CD4-positive, alpha-beta memory T cell (primary cell): ENCODE measurements at regions of chr1 and their contacts with region 1.

Region 1: DNA sequence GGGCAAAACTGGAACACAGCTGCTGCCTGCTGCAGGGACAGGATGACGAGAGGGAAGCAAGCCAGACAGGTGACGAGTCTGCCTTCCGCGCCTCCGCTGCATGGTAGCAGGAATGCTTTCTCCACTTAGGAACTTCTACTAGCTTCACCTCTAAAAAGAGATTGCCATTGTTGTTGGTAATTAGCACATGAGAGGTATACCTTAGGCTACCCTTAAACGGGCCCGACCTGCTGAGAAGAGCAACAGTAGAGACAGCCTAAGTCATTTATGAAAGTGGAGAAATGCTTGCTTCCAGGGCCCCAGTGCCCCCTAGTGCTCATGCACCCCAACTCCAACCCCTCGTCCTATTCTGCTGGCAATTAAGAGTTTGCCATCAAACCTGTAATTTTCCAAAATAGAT is 96.9 kb upstream of the AKT3 start:
- DNase-seq: peak in 4 of 5 donors; percentile 34 to 41 (median 38)
- H3K4me3 ChIP-seq: no peak overlapping the region
- H3K4me3 Mint-ChIP-seq: peak overlapping the region in 1 of 8 donors; percentile 73
- H3K27ac ChIP-seq: no peak overlapping the region
- H3K27ac Mint-ChIP-seq: peak overlapping the region in 1 of 7 donors; percentile 66
- H3K4me1 ChIP-seq: no peaks in the 10 kb centered on the region
- H3K4me1 Mint-ChIP-seq: peaks cover 0 to under 1% (median 0%) of the 10 kb centered on the region in 4 donors
- H3K27me3 ChIP-seq: no peaks in the 10 kb centered on the region
- H3K27me3 Mint-ChIP-seq: peaks cover 0 to 2% of the 10 kb centered on the region in 2 donors

Region 2: DNA sequence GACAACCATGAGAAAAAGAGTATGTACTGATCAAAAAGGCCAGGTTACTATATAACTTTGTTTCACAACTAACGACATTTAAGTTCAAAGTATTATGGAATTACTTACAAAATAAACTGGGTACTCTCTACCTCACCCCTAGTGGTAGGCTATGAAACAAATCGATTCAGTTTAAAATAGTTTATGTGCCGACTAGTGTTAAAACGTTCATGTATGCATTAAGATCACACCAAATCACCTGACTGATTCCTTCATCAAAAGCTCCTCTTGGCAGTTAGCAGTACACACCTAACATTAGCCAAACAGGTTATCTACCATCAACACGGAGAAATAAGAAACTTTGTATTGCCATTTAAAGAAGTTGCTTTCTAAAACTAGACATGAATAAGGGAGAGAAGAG is 234.0 kb before region 1 on chr1:
- CTCF ChIA-PET with region 1: interaction called, 3 read pairs
- POLR2A ChIA-PET with region 1: no interaction called
- intact Hi-C with region 1: loop called (anchors 1 kb)
- DNase-seq: no peak
- H3K4me3 ChIP-seq: no peak overlapping the region
- H3K4me3 Mint-ChIP-seq: no peak overlapping the region
- H3K27ac ChIP-seq: no peak overlapping the region
- H3K27ac Mint-ChIP-seq: no peak overlapping the region
- H3K4me1 ChIP-seq: peaks cover 7% of the 10 kb centered on the region
- H3K4me1 Mint-ChIP-seq: peaks cover 38 to 57% (median 48%) of the 10 kb centered on the region in 4 donors
- H3K27me3 ChIP-seq: no peaks in the 10 kb centered on the region
- H3K27me3 Mint-ChIP-seq: no peaks in the 10 kb centered on the region

Region 3: DNA sequence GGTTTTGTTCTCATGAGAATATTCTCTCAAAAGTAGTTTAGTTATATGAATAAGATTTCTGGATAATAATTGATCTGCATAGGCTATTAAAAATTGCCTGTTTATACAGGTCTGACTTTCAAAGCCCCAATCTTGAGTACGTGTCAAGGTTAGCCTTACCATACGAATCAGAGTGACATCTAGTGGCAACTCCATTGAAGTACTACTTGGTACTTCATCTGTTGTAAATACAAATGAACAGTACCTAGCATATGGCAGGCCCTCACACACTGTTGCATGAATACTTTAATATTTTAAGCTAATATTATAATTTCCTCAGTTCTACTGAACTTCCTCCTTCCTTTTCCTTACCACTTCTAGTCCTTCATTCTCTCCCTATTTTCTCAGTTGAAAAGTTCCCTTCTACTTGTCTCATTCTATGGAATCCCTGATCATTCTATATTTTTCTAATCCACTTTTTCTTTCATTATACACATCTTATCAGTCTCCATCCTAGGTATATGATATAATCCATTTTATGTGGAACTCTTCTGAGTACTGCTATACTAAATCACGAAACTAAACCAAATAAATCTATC is 198.2 kb before region 1 on chr1:
- CTCF ChIA-PET with region 1: no interaction called
- POLR2A ChIA-PET with region 1: no interaction called
- intact Hi-C with region 1: loop called (anchors 2 kb)
- DNase-seq: peak in 4 of 5 donors; percentile 32 to 56 (median 44)
- H3K4me3 ChIP-seq: no peak overlapping the region
- H3K4me3 Mint-ChIP-seq: no peak overlapping the region
- H3K27ac ChIP-seq: no peak overlapping the region
- H3K27ac Mint-ChIP-seq: peak overlapping the region in 5 of 7 donors; percentile 14 to 75 (median 29)
- H3K4me1 ChIP-seq: peaks cover 5% of the 10 kb centered on the region
- H3K4me1 Mint-ChIP-seq: peaks cover 28 to 46% (median 36%) of the 10 kb centered on the region in 4 donors
- H3K27me3 ChIP-seq: no peaks in the 10 kb centered on the region
- H3K27me3 Mint-ChIP-seq: no peaks in the 10 kb centered on the region

Region 4: GRCh38 chr1:244214009-244214967 is 267.3 kb after region 1 on chr1:
- CTCF ChIA-PET with region 1: no interaction called
- POLR2A ChIA-PET with region 1: no interaction called
- intact Hi-C with region 1: no loop called
- DNase-seq: no peak
- H3K4me3 ChIP-seq: no peak overlapping the region
- H3K4me3 Mint-ChIP-seq: no peak overlapping the region
- H3K27ac ChIP-seq: no peak overlapping the region
- H3K27ac Mint-ChIP-seq: no peak overlapping the region
- H3K4me1 ChIP-seq: no peaks in the 10 kb centered on the region
- H3K4me1 Mint-ChIP-seq: no peaks in the 10 kb centered on the region
- H3K27me3 ChIP-seq: no peaks in the 10 kb centered on the region
- H3K27me3 Mint-ChIP-seq: peaks cover 0 to 7% of the 10 kb centered on the region in 2 donors